ENCODE measurements at regions of chr13 and their contacts with region 1.

Region 1: GRCh38 chr13:49976314-49977258 is 20.3 kb upstream of the TRIM13 start:
- DNase-seq: peak; percentile 68 to 78
- H3K4me3 ChIP-seq: no peak overlapping the region
- H3K27ac ChIP-seq: no peak overlapping the region
- H3K4me1 ChIP-seq: no peaks in the 10 kb centered on the region
- H3K27me3 ChIP-seq: no peaks in the 10 kb centered on the region
- CTCF ChIP-seq: peak; percentile 79 to 91 (median 84)
- POLR2A ChIP-seq: no peak

Region 2: GRCh38 chr13:49784886-49785570 is 191.6 kb before region 1 on chr13:
- intact Hi-C with region 1: no loop called
- DNase-seq: no peak
- H3K4me3 ChIP-seq: no peak overlapping the region
- H3K27ac ChIP-seq: no peak overlapping the region
- H3K4me1 ChIP-seq: peaks cover 0 to 33% of the 10 kb centered on the region in 2 donors
- H3K27me3 ChIP-seq: no peaks in the 10 kb centered on the region
- CTCF ChIP-seq: no peak
- POLR2A ChIP-seq: no peak

Region 3: DNA sequence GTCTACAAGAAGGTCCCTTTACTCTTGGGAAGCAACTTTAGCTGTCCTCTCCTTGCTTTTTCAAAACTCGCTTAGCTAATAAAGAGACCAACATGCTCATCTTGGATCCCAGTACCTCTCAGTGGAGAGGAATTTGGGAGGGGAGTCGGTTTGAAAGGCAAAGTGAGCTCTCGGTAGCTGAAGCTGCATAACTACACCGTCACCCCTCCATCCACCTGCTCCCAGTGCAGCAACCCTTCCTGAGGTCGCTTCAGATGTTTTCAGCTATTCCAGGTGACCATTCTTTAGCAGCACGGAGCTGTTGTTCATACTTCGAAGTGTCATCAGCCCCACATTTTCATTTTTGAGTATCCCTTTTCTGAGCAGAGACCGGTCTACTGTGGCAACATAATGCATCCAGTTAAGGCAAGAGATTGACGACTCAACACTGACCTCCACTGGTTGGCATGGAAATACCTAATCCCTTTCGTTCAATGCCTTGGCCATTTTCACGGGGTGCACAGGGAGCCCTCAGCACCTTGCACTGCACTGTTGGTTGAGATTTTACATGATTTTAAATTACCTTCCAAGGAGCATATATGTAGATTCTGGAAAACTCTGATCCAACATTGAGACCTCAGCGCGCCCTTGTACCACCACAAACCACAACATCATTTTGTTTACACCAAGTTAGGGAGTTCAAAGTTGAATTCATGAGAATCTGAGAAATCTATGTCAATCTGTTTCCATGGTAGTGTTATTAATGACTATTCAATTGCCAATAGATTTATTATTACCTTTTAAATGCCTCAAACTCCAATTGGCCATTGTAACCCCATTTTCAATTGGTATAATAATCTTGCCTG is 824.7 kb after region 1 on chr13:
- intact Hi-C with region 1: loop called (anchors 5 kb)
- DNase-seq: peak; percentile 52 to 56
- H3K4me3 ChIP-seq: no peak overlapping the region
- H3K27ac ChIP-seq: no peak overlapping the region
- H3K4me1 ChIP-seq: no peaks in the 10 kb centered on the region
- H3K27me3 ChIP-seq: no peaks in the 10 kb centered on the region
- CTCF ChIP-seq: peak; percentile 37 to 85 (median 76)
- POLR2A ChIP-seq: no peak

Region 4: DNA sequence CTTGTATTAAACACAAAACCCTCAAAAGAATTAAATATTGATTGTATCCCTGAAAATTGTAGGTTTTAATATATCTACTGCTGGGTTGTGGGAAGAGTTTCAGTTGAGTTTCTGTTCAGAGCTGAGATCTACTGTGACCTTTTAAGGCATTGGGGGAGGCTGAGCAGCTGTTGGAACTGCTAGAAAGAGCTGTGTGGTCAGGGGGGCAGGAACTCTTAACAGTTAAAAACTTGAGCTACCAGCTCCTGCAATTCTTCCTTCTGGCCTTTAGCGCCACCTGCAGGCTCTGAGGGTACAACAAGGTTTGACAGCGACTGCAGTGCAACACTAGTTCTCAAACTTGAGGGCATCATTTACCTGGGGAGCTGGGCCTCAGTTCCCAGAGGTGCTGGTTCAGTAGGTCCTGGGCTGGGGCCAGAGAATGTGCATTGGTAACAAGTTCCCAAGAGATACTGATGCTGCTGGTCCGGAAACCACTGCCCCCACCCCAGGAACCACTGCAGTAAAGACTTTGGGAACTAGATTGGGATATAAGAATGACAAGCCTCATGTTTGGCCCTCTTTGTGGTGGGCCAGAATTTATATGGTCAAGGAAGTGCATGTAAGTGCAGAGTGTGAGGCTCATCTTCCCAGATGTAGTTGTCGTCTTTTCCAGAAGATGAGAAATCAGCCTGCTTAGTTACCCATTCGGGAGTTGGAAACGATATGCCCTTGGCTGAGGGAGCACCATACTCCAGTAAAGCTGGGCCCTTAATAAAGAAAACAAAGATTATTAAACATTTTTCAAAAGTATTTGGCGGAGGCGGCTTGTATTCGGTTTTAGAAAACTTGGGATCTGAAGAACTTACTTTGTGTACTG is 935.6 kb after region 1 on chr13:
- intact Hi-C with region 1: loop called (anchors 10 kb)
- DNase-seq: peak; percentile 88 to 92
- H3K4me3 ChIP-seq: no peak overlapping the region
- H3K27ac ChIP-seq: no peak overlapping the region
- H3K4me1 ChIP-seq: peaks cover 23 to 47% of the 10 kb centered on the region in 2 donors
- H3K27me3 ChIP-seq: no peaks in the 10 kb centered on the region
- CTCF ChIP-seq: peak; percentile 37 to 88 (median 82)
- POLR2A ChIP-seq: no peak

Region 5: DNA sequence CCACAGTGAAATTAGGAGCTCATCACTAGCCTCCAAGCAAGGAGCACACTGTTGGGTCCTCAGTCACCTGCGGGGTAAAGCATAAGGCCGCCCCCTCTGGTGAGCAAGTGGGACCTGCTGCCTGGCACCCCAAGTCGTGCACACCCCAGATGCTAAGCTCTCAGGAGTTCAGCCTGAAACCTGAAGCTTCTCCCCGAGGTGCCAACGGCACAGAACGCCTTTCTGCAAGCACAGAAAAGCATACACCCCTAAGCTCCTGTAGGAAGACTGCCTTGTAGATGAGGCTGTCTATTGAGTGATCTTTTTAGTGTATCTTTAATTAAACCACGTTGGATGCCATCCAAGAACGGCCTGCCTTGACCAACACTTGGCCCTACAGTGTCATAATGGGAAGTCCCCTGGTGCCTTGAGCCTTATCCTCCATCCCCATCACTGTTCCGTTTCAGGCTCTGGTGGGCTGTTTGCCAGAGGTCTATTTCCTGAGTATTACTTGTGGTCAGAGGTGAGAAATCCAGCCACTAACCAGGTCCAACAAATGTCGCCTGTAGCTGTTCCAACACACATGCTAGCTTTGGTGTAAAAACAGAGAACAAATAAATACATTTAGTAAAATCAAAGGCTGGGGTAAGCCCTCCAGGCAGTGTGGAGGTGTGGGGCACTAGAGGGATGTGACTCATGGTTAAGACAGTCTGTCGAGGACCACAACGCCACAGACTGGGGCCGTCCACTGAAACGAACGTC is 1089.7 kb after region 1 on chr13:
- intact Hi-C with region 1: loop called (anchors 10 kb)
- DNase-seq: no peak
- H3K4me3 ChIP-seq: no peak overlapping the region
- H3K27ac ChIP-seq: no peak overlapping the region
- H3K4me1 ChIP-seq: peaks cover 0 to 4% of the 10 kb centered on the region in 2 donors
- H3K27me3 ChIP-seq: no peaks in the 10 kb centered on the region
- CTCF ChIP-seq: no peak
- POLR2A ChIP-seq: no peak

Measured in thyroid gland (tissue), 4 donors.